KBM-7 (cell line): ENCODE measurements at regions of chr10 and their contacts with region 1.

Region 1: DNA sequence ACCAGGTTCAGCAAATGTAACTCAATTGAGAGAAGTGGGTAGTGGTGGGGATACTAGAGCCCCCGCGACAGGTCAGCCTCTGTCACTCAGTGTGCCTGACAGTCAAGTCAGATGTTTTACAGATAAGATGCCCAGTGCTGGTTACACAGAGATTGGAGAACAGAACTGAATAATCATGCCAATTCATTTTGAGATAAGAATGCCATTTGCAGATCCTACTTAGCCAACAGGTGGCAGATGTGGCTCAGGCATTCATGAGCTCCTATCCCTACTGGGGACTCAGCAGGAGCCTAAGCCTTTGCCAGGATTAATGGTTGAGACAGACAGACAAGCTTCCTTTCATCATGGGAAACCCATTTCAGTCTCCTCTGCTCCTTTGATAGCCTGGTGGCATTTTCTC is 137.8 kb downstream of the MAPK8 start:
- DNase-seq: peak; percentile 68

Region 2: GRCh38 chr10:48506147-48506917 is 62.1 kb after region 1 on chr10:
- in situ Hi-C with region 1: loop called (anchors 10 kb)
- DNase-seq: peak; percentile 76

Region 3: GRCh38 chr10:48833674-48834073 is 389.4 kb after region 1 on chr10:
- in situ Hi-C with region 1: no loop called
- DNase-seq: no peak

Region 4: DNA sequence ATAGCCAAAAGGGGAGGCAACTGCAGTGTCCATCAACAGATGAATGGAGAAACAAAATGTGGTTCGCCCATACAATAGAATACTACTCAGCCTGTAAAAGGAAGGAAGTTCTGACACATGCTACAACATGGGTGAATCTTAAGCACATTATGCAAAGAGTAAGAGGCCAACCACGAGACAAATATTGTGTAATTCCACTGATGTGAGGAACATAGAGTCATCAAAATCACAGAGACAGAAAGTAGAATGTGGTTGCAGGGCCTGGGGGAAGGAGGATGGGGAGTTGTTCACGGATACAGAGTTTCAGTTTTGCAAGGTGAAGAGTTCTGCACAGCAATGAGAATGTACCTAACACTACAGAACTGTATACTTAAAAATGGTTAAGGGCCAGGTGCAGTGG is 841.0 kb after region 1 on chr10:
- in situ Hi-C with region 1: no loop called
- DNase-seq: no peak